ENCODE measurements at regions of chr5 and their contacts with region 1.

Region 1: DNA sequence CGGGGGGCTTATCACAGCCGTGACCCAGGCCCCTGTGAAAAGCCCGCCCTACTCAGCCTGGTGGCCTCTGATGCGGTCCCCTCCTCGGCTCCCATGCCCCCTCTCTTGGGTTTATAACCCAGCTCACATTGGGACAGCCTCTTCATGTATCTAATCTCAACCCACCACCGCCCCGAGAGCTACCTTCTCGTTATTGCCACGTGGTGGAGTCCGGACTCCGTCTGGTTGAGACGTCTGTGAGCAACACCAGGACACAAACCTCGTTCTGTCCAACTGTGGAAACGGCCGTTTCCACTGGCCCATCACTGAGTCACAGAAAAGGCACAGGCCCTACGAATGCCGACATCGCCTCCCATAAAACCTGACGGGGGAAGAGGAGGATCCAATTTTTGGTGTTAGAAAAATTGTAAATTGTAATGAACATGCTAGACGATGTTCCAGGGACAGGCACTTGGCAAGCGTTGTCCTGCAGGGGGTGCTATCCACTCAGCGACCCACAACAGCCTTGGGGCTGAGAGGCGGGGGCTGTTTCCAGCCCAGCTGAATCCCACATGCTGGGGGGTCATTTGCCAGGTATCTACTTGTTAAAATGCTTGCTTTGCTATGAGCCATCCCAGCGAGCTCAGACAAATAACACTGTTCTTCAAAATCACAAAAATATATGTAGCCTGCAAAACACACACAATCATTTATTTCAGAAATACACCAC is 37.3 kb upstream of the N4BP3 start:
- DNase-seq: no peak
- ATAC-seq: peak; percentile 96
- H3K4me3 ChIP-seq: no peak overlapping the region
- H3K27ac ChIP-seq: no peak overlapping the region
- H3K4me1 ChIP-seq: no peaks in the 10 kb centered on the region; the same call in 1 of the 2 replicates
- H3K27me3 ChIP-seq: no peaks in the 10 kb centered on the region
- CTCF ChIP-seq: peak; percentile 81 to 93 (median 85)
- EP300 ChIP-seq: no peak
- POLR2A ChIP-seq: no peak
- RAD21 ChIP-seq: peak; percentile 96

Region 2: DNA sequence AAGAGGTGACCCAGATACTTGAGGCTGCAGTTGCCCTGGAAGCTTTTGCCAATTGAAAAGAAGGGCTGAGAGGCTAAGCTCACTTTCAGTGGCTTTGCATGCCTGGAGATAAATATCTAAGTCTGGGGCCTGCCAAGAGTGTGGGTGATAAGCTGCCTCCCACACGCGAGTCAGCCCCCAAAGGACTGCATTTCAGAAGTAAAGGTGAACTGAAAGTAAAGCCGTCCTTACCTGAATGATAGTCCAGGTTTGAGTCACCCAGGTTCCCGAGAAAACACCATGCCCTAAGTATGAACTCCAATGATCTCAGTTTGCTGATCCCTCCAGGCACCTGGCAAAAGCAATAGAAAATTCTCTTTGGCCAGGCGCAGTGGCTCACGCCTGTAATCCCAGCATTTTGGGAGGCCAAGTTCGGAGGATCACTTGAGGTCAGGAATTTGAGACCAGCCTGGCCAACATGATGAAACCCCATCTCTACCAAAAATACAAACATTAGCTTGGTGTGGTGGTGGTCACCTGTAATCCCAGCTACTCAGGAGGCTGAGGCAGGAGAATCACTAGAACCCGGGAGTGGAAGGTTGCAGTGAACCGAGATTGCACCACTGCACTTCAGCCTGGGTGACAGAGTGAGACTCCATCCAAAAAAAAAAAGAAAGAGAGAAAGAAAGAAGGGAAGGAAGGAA is 15.0 kb after region 1 on chr5:
- CTCF ChIA-PET with region 1: interaction called, 13 read pairs
- POLR2A ChIA-PET with region 1: no interaction called
- RAD21 ChIA-PET with region 1: interaction called, 5 read pairs
- SMC1A ChIA-PET with region 1: interaction called, 4 read pairs
- in situ Hi-C with region 1: no loop called
- intact Hi-C with region 1: no loop called
- DNase-seq: no peak
- ATAC-seq: no peak
- H3K4me3 ChIP-seq: no peak overlapping the region
- H3K27ac ChIP-seq: no peak overlapping the region
- H3K4me1 ChIP-seq: peaks cover 6% of the 10 kb centered on the region; the same call in 1 of the 2 replicates
- H3K27me3 ChIP-seq: no peaks in the 10 kb centered on the region; a peak in 1 of 4 replicates
- CTCF ChIP-seq: no peak
- EP300 ChIP-seq: no peak
- POLR2A ChIP-seq: no peak
- RAD21 ChIP-seq: no peak

Region 3: DNA sequence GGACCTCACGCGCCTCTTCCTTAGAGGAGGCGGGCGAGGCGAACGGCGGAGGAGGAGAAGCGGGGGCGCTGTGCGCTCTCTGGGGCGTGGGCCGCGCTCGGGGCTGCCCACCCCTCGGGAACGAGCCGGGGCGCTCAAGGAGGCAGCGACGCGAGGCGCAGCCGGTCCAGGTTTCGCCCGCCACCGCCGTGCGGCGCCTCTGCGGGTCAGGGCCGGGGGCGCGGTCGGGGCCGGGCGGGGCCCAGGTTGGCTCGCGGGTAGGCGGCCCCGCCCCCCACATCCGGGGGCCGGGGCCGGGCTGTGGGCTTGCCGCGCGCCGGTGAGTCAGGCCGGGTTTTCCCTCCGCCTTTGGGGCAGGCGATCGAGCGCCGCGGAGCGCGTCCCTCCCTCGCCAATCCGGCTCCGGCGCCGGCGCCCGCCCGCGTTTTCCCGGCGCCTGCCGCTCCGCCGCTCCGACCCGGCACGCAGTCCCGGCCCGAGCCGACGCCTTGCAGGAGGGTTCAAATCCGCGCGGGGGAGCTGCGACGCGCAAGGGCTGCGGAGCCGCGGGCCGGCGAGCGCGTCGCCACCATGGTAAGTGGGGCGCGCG is 37.3 kb after region 1 on chr5 and contains the start of gene N4BP3:
- CTCF ChIA-PET with region 1: interaction called, 5 read pairs
- POLR2A ChIA-PET with region 1: no interaction called
- RAD21 ChIA-PET with region 1: interaction called, 4 read pairs
- SMC1A ChIA-PET with region 1: no interaction called
- in situ Hi-C with region 1: no loop called
- intact Hi-C with region 1: loop called (anchors 5 kb)
- DNase-seq: no peak
- ATAC-seq: peak; percentile 70
- H3K4me3 ChIP-seq: peak within 1 kb of the TSS; percentile 88
- H3K27ac ChIP-seq: peak within 1 kb of the TSS; percentile 72
- H3K4me1 ChIP-seq: peaks cover 30% of the 10 kb centered on the region
- H3K27me3 ChIP-seq: no peaks in the 10 kb centered on the region
- CTCF ChIP-seq: peak in 1 of 3 experiments; percentile 17; a peak in 2 of 6 replicates
- EP300 ChIP-seq: peak; percentile 11 to 62; a peak in 1 of 4 replicates
- POLR2A ChIP-seq: no peak
- RAD21 ChIP-seq: no peak
- polyA plus RNA-seq, gene N4BP3: 0.06 to 0.27 TPM

Region 4: GRCh38 chr5:178146020-178146820 is 70.2 kb after region 1 on chr5:
- CTCF ChIA-PET with region 1: interaction called, 183 read pairs
- POLR2A ChIA-PET with region 1: no interaction called
- RAD21 ChIA-PET with region 1: interaction called, 30 read pairs
- SMC1A ChIA-PET with region 1: interaction called, 45 read pairs
- in situ Hi-C with region 1: loop called (anchors 5 kb)
- intact Hi-C with region 1: loop called (anchors 1 kb)
- DNase-seq: no peak
- ATAC-seq: peak; percentile 98
- H3K4me3 ChIP-seq: no peak overlapping the region
- H3K27ac ChIP-seq: no peak overlapping the region
- H3K4me1 ChIP-seq: peaks cover 13% of the 10 kb centered on the region
- H3K27me3 ChIP-seq: no peaks in the 10 kb centered on the region
- CTCF ChIP-seq: peak; percentile 85 to 93 (median 89); a peak in 5 of 6 replicates
- EP300 ChIP-seq: no peak
- POLR2A ChIP-seq: peak; percentile 33; the same call in 1 of the 2 replicates
- RAD21 ChIP-seq: peak; percentile 56

Region 5: DNA sequence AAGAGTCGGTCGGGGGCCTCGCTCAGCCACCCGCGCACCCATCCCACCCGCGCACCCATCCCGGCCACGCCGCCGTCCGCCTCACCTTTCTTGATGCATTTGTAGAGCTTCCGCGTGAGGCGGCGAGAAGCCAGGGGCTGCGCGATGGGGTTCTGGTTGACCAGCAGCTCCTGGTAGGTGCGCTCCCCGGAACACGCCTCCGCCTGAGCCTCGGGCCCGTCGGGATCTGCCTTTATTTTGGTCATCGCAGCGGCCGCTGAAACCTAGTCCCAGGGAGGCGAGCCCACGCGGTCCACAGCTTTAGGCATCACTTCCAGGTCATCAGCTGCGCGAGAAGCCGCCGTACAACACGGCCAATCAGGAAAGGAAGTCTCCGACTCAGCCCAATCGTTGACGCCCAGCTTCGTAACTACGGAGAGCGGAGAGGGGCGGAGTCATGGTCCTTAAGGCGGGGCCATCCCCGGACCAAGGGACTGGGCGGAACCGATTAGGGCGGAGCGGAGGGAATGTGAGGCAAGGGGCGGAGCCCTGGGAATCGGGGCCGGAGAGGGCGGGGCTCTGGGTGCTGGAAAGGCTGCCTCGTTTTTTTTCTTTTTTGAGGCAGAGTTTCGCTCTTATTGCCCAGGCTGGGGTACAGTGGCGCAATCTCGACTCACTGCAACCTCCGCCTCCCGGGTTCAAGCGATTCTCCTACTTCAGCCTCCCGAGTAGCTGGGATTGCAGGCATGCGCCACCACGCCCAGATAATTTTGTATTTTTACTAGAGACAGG is 77.8 kb after region 1 on chr5 and contains the start of gene NHP2:
- CTCF ChIA-PET with region 1: interaction called, 183 read pairs
- POLR2A ChIA-PET with region 1: no interaction called
- RAD21 ChIA-PET with region 1: interaction called, 10 read pairs
- SMC1A ChIA-PET with region 1: interaction called, 14 read pairs
- in situ Hi-C with region 1: loop called (anchors 5 kb)
- intact Hi-C with region 1: no loop called
- DNase-seq: peak; percentile 92
- ATAC-seq: peak; percentile 99
- H3K4me3 ChIP-seq: peak within 1 kb of the TSS; percentile 89
- H3K27ac ChIP-seq: peak within 1 kb of the TSS; percentile 67
- H3K4me1 ChIP-seq: peaks cover 7% of the 10 kb centered on the region; the same call in 1 of the 2 replicates
- H3K27me3 ChIP-seq: no peaks in the 10 kb centered on the region
- CTCF ChIP-seq: no peak
- EP300 ChIP-seq: no peak
- POLR2A ChIP-seq: peak; percentile 81
- RAD21 ChIP-seq: no peak
- polyA plus RNA-seq, gene NHP2: 39.2 to 127 TPM

Region 6: DNA sequence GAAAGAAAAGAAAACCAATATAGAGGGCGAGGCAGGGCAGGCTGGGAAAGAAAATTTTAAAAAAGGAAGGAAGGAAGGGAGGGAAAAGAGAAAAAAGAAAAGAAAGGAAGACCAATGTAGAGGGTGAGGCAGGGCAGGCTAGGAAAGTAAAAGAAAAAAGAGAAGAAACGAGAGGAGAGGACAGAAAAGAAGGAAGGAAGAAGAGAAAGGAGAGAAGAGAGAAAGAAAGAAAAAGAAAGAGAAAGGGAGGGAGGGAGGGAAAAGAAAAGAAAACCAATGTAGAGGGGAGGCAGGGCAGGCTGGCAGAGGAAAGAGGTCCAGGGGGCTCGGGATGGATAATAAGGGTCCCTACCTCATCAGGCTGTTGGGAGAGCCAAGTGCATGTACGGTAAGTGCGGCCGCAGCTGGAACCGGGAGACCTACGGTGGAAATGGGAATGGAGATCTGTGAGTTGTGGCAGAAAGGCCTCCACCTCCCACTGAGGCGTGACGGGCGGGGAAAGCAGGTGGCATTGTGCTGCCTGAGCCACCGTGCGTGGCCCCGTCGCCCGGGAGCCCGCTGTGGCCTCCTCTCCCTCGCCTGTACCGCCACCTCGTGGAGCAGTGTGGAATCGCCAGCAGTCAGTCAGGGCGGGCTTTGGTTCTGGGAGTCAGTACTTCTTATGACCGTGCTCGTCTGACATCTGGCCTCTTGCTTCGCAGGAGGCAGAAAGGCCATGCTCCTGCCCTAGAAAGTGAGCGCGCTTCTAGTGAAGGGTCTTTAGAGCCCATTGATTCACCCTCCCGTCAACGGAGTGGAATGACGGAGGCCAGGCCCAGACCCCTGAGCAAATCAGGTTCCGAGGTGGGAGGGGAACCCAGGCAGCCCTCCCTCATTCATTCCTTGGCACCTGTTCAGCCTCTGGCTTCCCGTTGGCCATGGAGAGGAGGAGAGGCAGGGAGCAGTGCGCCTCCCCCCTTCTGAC is 88.1 kb after region 1 on chr5:
- CTCF ChIA-PET with region 1: interaction called, 39 read pairs
- POLR2A ChIA-PET with region 1: no interaction called
- RAD21 ChIA-PET with region 1: interaction called, 18 read pairs
- SMC1A ChIA-PET with region 1: interaction called, 11 read pairs
- in situ Hi-C with region 1: no loop called
- intact Hi-C with region 1: loop called (anchors 1 kb)
- DNase-seq: peak; percentile 34
- ATAC-seq: peak; percentile 98
- H3K4me3 ChIP-seq: no peak overlapping the region
- H3K27ac ChIP-seq: no peak overlapping the region
- H3K4me1 ChIP-seq: no peaks in the 10 kb centered on the region
- H3K27me3 ChIP-seq: no peaks in the 10 kb centered on the region
- CTCF ChIP-seq: peak; percentile 99 to 100 (median 99); a peak in 5 of 6 replicates
- EP300 ChIP-seq: no peak
- POLR2A ChIP-seq: no peak
- RAD21 ChIP-seq: peak; percentile 99